ENCODE measurements at regions of chr14 and their contacts with region 1.

Region 1: DNA sequence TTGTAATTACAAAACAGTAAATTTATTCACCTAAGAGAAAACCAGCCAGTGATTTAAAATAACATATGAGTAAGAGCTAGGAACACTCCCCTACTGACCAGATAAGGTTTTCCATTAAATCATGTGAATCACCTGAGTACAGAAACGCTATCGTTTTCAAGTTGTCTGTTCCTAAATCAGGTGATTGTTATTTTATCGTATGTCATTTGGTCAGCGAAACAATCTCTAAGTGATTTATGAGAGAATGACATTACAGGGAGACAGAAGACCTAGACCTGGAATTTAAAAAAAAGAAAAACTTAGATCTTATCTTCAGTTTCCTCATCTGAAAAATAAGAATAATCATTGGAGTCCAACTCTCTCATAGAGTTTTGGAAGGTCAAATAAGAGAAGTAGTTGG is 47.3 kb downstream of the RPS29 start:
- DNase-seq: no peak
- H3K4me3 ChIP-seq: no peak overlapping the region
- H3K27ac ChIP-seq: no peak overlapping the region
- H3K4me1 ChIP-seq: no peaks in the 10 kb centered on the region
- H3K27me3 ChIP-seq: no peaks in the 10 kb centered on the region
- CTCF ChIP-seq: no peak
- EP300 ChIP-seq: no peak
- POLR2A ChIP-seq: no peak
- RAD21 ChIP-seq: no peak

Region 2: DNA sequence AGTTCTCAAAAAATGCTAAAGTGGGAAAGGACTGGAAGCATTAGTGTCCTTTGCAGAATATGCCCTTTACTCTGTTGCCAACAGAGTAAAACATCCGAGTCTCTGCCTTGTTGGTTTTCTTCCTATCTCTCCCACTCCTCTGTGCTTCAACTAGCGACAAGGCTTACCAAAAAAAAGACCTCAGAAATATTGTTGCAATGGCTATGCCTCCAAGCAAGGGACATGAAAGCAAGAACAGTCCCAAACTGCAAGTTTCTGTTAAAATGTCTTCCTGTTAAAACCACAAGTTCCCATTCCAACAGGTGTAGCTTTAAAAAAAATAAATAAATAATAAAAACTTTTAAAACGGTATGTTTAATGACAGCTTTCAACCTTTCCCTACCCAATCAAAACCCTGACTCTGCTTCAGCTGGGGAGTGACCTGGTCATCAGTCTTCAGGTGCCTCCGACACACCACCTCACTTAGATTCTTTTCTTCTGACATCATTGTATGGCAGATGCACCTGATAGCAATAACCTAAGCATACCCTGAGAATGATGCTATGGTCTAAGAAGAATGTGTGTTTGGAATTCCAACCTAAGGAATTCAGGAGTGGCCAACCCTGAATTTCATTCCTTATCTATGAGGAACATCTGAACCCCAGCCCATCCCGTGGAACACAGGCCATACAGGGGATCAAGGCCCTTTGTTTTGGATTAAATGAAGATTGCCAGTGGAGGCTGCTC is 33.7 kb before region 1 on chr14:
- CTCF ChIA-PET with region 1: no interaction called
- POLR2A ChIA-PET with region 1: no interaction called
- DNase-seq: peak in 1 of 2 experiments; percentile 19
- H3K4me3 ChIP-seq: no peak overlapping the region
- H3K27ac ChIP-seq: no peak overlapping the region
- H3K4me1 ChIP-seq: peaks cover 0 to 5% (median 2%) of the 10 kb centered on the region in 4 experiments; a peak in 3 of 7 replicates
- H3K27me3 ChIP-seq: no peaks in the 10 kb centered on the region
- CTCF ChIP-seq: no peak
- EP300 ChIP-seq: no peak
- POLR2A ChIP-seq: no peak
- RAD21 ChIP-seq: no peak

Region 3: GRCh38 chr14:49526101-49526500 is 12.8 kb before region 1 on chr14:
- CTCF ChIA-PET with region 1: interaction called, 11 read pairs
- POLR2A ChIA-PET with region 1: interaction called, 4 read pairs
- DNase-seq: no peak
- H3K4me3 ChIP-seq: no peak overlapping the region
- H3K27ac ChIP-seq: no peak overlapping the region
- H3K4me1 ChIP-seq: no peaks in the 10 kb centered on the region
- H3K27me3 ChIP-seq: no peaks in the 10 kb centered on the region
- CTCF ChIP-seq: no peak
- EP300 ChIP-seq: no peak
- POLR2A ChIP-seq: no peak
- RAD21 ChIP-seq: no peak

Region 4: GRCh38 chr14:49550286-49551184 is 11.6 kb after region 1 on chr14:
- CTCF ChIA-PET with region 1: interaction called, 14 read pairs
- POLR2A ChIA-PET with region 1: interaction called, 6 read pairs
- DNase-seq: no peak
- H3K4me3 ChIP-seq: peak overlapping the region in 1 of 4 experiments; percentile 37; a peak in 1 of 8 replicates
- H3K27ac ChIP-seq: no peak overlapping the region
- H3K4me1 ChIP-seq: peaks cover 0 to 9% (median 6%) of the 10 kb centered on the region in 4 experiments; a peak in 3 of 7 replicates
- H3K27me3 ChIP-seq: no peaks in the 10 kb centered on the region
- CTCF ChIP-seq: peak in 2 of 3 experiments; percentile 23 to 55; a peak in 2 of 4 replicates
- EP300 ChIP-seq: no peak
- POLR2A ChIP-seq: no peak
- RAD21 ChIP-seq: peak; percentile 75